ENCODE measurements at regions of chr2 and their contacts with region 1.

Region 1: GRCh38 chr2:26770986-26771602 is 7.0 kb downstream of the SLC35F6 start:
- DNase-seq: peak; percentile 98
- H3K4me3 Mint-ChIP-seq: peak overlapping the region; percentile 44
- H3K27ac Mint-ChIP-seq: peak overlapping the region; percentile 72
- H3K4me1 Mint-ChIP-seq: peaks cover 37% of the 10 kb centered on the region
- H3K27me3 Mint-ChIP-seq: no peaks in the 10 kb centered on the region
- CTCF ChIP-seq: peak; percentile 58

Region 2: DNA sequence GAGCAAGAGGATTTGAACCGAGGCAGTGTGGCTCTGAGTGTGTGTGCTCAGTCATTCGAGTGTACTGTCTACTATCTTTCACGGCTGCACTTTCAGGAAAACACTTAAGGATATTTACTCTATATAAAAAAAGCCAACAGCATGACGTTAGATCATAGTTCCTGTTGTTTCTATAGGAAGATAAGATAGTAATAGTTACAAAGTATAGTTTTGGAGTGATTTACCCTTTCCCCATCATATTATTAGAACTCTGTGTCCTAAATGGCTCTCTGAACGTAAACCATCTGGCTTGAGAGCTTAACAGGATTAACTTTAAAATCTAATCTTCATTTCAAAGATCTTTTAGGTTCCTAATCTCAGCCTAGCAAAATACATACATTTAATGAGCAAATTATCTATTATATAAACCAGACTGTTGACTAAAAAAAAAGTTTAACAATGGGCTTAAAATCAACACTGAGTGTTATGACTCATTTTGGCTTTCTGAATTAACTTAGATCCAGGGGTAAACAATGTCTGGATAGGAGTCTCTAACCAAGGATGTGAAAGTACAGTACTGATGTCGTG is 1279.0 kb before region 1 on chr2:
- CTCF ChIA-PET with region 1: no interaction called
- POLR2A ChIA-PET with region 1: no interaction called
- intact Hi-C with region 1: no loop called
- DNase-seq: peak; percentile 45
- H3K4me3 Mint-ChIP-seq: no peak overlapping the region
- H3K27ac Mint-ChIP-seq: no peak overlapping the region
- H3K4me1 Mint-ChIP-seq: peaks cover 13% of the 10 kb centered on the region
- H3K27me3 Mint-ChIP-seq: no peaks in the 10 kb centered on the region
- CTCF ChIP-seq: no peak

Region 3: GRCh38 chr2:26268184-26268583 is 502.9 kb before region 1 on chr2:
- CTCF ChIA-PET with region 1: no interaction called
- POLR2A ChIA-PET with region 1: no interaction called
- intact Hi-C with region 1: no loop called
- DNase-seq: peak; percentile 35
- H3K4me3 Mint-ChIP-seq: no peak overlapping the region
- H3K27ac Mint-ChIP-seq: no peak overlapping the region
- H3K4me1 Mint-ChIP-seq: peaks cover 23% of the 10 kb centered on the region
- H3K27me3 Mint-ChIP-seq: no peaks in the 10 kb centered on the region
- CTCF ChIP-seq: no peak

Region 4: DNA sequence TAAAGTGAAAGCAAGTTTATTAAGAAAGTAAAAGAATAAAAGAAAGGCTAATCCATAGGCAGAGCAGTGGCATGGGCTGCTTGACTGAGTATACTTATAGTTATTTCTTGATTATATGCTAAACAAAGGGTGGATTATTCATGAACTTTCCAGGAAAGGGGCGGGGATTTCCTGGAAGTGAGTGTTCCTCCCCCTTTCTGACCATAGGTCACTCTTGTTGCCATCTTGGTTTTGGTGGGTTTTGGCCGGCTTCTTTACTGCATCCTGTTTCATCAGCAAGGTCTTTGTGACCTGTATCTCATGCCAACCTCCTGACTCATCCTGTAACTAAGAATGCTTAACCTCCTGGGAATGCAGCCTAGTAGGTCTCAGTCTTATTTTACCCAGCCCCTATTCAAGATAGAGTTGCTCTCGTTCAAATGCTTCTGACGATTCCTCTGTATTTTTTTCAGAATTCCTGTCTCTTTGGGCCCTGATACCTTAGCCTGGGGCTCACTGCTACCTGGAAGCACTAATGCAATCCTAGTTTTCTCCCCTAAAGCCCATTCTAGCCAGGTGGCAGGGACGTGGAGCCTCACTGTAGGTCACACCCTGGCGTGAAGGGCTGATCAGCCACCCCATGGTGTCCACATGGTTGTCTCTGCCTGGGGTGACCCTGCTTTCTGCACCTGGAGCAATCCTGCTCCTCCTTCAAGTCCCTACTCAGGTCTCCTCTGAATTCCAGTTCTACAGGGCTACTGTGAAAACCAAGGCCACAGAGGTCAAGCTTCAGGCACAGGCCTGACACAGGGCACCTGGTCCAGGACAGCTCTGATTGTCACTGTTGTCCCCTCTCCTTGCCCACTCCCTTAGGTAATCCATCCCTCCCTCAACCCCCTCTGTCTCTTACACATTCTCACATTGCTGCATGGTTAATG is 13.0 kb before region 1 on chr2:
- CTCF ChIA-PET with region 1: interaction called, 3 read pairs
- POLR2A ChIA-PET with region 1: interaction called, 9 read pairs
- intact Hi-C with region 1: loop called (anchors 1 kb)
- DNase-seq: peak; percentile 98
- H3K4me3 Mint-ChIP-seq: no peak overlapping the region
- H3K27ac Mint-ChIP-seq: peak overlapping the region; percentile 90
- H3K4me1 Mint-ChIP-seq: peaks cover 17% of the 10 kb centered on the region
- H3K27me3 Mint-ChIP-seq: no peaks in the 10 kb centered on the region
- CTCF ChIP-seq: no peak

Region 5: GRCh38 chr2:26785431-26786206 is 14.5 kb after region 1 on chr2 and contains the start of gene CENPA:
- CTCF ChIA-PET with region 1: interaction called, 3 read pairs
- POLR2A ChIA-PET with region 1: interaction called, 22 read pairs
- intact Hi-C with region 1: no loop called
- DNase-seq: peak; percentile 100
- H3K4me3 Mint-ChIP-seq: peak within 1 kb of the TSS; percentile 76
- H3K27ac Mint-ChIP-seq: peak within 1 kb of the TSS; percentile 37
- H3K4me1 Mint-ChIP-seq: peaks cover 20% of the 10 kb centered on the region
- H3K27me3 Mint-ChIP-seq: no peaks in the 10 kb centered on the region
- CTCF ChIP-seq: no peak
- total RNA-seq, gene CENPA: 19.7 and 35.1 TPM in 2 replicates

Region 6: GRCh38 chr2:26807788-26808460 is 36.8 kb after region 1 on chr2:
- CTCF ChIA-PET with region 1: no interaction called
- POLR2A ChIA-PET with region 1: no interaction called
- intact Hi-C with region 1: no loop called
- DNase-seq: no peak
- H3K4me3 Mint-ChIP-seq: no peak overlapping the region
- H3K27ac Mint-ChIP-seq: no peak overlapping the region
- H3K4me1 Mint-ChIP-seq: no peaks in the 10 kb centered on the region
- H3K27me3 Mint-ChIP-seq: peaks cover 11% of the 10 kb centered on the region
- CTCF ChIP-seq: no peak

Region 7: DNA sequence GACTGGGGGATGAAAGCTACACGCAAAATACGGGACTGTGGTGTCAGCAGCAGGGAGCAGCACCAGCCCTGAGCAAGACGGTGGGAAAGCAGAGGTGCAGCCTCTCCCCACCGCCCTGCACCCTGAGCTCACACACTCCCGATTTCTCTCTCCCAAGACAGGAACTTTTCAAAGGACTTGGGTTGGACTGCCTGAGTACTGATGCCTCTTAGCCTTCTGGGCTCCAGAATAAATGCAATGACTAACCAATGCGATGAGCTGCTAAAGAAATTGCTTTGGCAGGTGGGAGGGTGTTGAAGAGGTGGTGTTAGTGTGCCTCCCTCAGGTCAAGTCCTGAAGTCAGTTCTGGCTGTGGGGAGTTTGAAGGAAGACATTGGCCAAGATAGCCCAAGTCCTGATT is 520.8 kb after region 1 on chr2:
- CTCF ChIA-PET with region 1: no interaction called
- POLR2A ChIA-PET with region 1: no interaction called
- intact Hi-C with region 1: no loop called
- DNase-seq: peak; percentile 33
- H3K4me3 Mint-ChIP-seq: no peak overlapping the region
- H3K27ac Mint-ChIP-seq: no peak overlapping the region
- H3K4me1 Mint-ChIP-seq: peaks cover 8% of the 10 kb centered on the region
- H3K27me3 Mint-ChIP-seq: peaks cover 14% of the 10 kb centered on the region
- CTCF ChIP-seq: no peak

Measured in MCF 10A (cell line).